Vagina (tissue), 2 donors: ENCODE measurements at regions of chr12 and their contacts with region 1.

Region 1: GRCh38 chr12:70733385-70733784 is 96.2 kb upstream of the PTPRB start:
- DNase-seq: no peak
- H3K4me3 ChIP-seq: no peak overlapping the region
- H3K27ac ChIP-seq: no peak overlapping the region
- H3K4me1 ChIP-seq: no peaks in the 10 kb centered on the region
- H3K27me3 ChIP-seq: no peaks in the 10 kb centered on the region
- CTCF ChIP-seq: peak; percentile 39 to 49 (median 44)
- POLR2A ChIP-seq: no peak

Region 2: GRCh38 chr12:71019282-71019831 is 286.0 kb after region 1 on chr12:
- intact Hi-C with region 1: loop called (anchors 5 kb)
- DNase-seq: no peak
- H3K4me3 ChIP-seq: no peak overlapping the region
- H3K27ac ChIP-seq: no peak overlapping the region
- H3K4me1 ChIP-seq: no peaks in the 10 kb centered on the region
- H3K27me3 ChIP-seq: no peaks in the 10 kb centered on the region
- CTCF ChIP-seq: no peak
- POLR2A ChIP-seq: no peak

Region 3: GRCh38 chr12:71385155-71385554 is 651.8 kb after region 1 on chr12:
- intact Hi-C with region 1: loop called (anchors 10 kb)
- DNase-seq: no peak
- H3K4me3 ChIP-seq: no peak overlapping the region
- H3K27ac ChIP-seq: no peak overlapping the region
- H3K4me1 ChIP-seq: no peaks in the 10 kb centered on the region
- H3K27me3 ChIP-seq: no peaks in the 10 kb centered on the region
- CTCF ChIP-seq: no peak
- POLR2A ChIP-seq: no peak